ENCODE measurements at regions of chr9 and their contacts with region 1.

Region 1: GRCh38 chr9:893843-894420 is 52.4 kb downstream of the DMRT1 start:
- DNase-seq: no peak
- H3K4me3 ChIP-seq: no peak overlapping the region
- H3K27ac ChIP-seq: no peak overlapping the region
- H3K4me1 ChIP-seq: peaks cover 0 to 4% (median 1%) of the 10 kb centered on the region in 4 donors
- H3K27me3 ChIP-seq: peaks cover 0 to 4% (median 0%) of the 10 kb centered on the region in 4 donors
- CTCF ChIP-seq: peak; percentile 56 to 69 (median 58)
- EP300 ChIP-seq: no peak
- POLR2A ChIP-seq: no peak

Region 2: DNA sequence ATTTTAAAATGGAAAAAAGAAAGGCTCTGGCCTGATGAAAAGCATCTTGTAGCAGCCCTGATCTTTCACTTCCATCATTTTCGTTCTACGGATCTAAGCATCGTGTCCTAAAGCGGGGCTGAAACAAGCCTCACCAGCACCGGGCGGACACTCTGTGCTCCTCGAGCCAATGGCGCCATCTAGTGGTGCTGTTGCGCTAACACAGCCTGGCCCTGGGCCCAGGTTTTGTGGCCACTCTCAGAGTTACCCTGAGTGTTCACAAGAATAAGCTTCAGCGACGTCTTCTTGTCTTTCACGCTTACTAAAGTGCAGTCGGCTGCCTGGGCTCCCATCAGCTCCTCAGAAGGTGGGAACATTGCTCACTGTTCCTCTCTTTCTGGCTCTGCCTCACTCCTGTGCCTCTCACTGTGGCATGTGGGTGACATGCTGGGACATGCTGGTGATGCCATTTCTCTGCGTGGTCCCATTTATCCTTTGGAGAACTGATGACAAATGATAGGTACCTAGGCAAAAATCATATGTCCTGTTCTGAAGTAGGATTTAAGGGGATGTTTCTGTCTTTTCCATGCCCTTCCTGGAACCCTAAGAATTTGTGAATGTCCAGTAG is 115.3 kb after region 1 on chr9:
- intact Hi-C with region 1: loop called (anchors 1 kb)
- DNase-seq: no peak
- H3K4me3 ChIP-seq: no peak overlapping the region
- H3K27ac ChIP-seq: no peak overlapping the region
- H3K4me1 ChIP-seq: peaks cover 0 to 5% (median 4%) of the 10 kb centered on the region in 4 donors
- H3K27me3 ChIP-seq: peaks cover 0 to 61% (median 0%) of the 10 kb centered on the region in 4 donors
- CTCF ChIP-seq: peak in 2 of 3 experiments; percentile 88 to 93
- EP300 ChIP-seq: no peak
- POLR2A ChIP-seq: no peak